Right lobe of liver (tissue), 6 donors: ENCODE measurements at regions of chr14 and their contacts with region 1.

Region 1: DNA sequence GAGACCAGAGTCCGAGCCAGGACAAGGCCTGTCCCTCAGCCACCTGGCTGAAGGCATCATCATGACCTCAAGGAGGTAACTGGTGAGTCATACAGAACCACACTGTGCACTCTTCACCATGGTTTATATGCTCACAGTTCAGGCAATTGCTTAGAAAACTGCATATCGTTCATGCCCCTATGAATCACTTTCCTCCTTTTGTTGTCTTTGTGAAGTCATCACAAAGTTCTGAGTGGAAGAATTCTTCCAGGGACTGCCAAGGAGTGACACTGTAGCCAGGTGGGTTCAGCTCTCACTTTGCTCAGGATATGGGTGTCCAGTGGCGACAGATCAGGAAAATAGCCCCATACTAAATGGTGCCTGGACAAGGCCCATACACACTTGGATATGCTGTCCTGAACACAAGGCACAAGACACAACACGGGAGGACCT is 92.5 kb downstream of the DPF3 start:
- DNase-seq: no peak
- ATAC-seq: peak in 1 of 4 donors; percentile 51
- H3K4me3 ChIP-seq: no peak overlapping the region
- H3K27ac ChIP-seq: no peak overlapping the region
- H3K4me1 ChIP-seq: no peaks in the 10 kb centered on the region
- H3K27me3 ChIP-seq: no peaks in the 10 kb centered on the region
- CTCF ChIP-seq: no peak
- POLR2A ChIP-seq: no peak

Region 2: GRCh38 chr14:72904840-72905561 is 103.6 kb after region 1 on chr14:
- intact Hi-C with region 1: loop called in 1 of 2 experiments (anchors 10 kb)
- DNase-seq: peak in 2 of 3 donors; percentile 63 to 73
- ATAC-seq: peak; percentile 95 to 98 (median 96)
- H3K4me3 ChIP-seq: no peak overlapping the region
- H3K27ac ChIP-seq: no peak overlapping the region
- H3K4me1 ChIP-seq: peaks cover 0 to 8% (median 0%) of the 10 kb centered on the region in 4 donors
- H3K27me3 ChIP-seq: no peaks in the 10 kb centered on the region
- CTCF ChIP-seq: peak; percentile 92 to 99 (median 95)
- POLR2A ChIP-seq: no peak

Region 3: DNA sequence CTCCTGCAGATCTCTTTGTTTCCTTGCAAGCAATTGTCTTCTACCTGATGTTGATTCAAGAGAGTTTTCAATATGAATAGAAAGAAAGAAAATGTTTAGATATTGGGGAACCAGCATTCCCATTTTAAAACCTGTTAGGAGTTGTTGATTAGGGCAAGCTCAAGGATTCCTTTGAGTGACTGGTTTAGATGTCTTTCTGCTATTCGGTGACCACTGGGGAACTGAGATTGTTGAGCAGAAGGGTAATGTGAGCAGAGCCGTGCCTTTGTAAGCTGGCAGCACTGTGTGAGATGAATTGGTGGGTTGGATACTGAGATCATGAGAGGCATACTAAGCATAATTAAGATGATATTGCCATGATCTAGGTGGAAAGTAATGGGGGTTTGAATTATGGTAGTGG is 396.9 kb after region 1 on chr14:
- intact Hi-C with region 1: no loop called
- DNase-seq: no peak
- ATAC-seq: no peak
- H3K4me3 ChIP-seq: no peak overlapping the region
- H3K27ac ChIP-seq: no peak overlapping the region
- H3K4me1 ChIP-seq: no peaks in the 10 kb centered on the region
- H3K27me3 ChIP-seq: no peaks in the 10 kb centered on the region
- CTCF ChIP-seq: no peak
- POLR2A ChIP-seq: no peak